ENCODE measurements at regions of chr2 and their contacts with region 1.

Region 1: GRCh38 chr2:226984750-226985582 is 149.1 kb downstream of the RHBDD1 start:
- DNase-seq: peak; percentile 45
- H3K4me3 Mint-ChIP-seq: no peak overlapping the region
- H3K27ac Mint-ChIP-seq: no peak overlapping the region
- H3K4me1 Mint-ChIP-seq: peaks cover 19% of the 10 kb centered on the region
- H3K27me3 Mint-ChIP-seq: no peaks in the 10 kb centered on the region

Region 2: DNA sequence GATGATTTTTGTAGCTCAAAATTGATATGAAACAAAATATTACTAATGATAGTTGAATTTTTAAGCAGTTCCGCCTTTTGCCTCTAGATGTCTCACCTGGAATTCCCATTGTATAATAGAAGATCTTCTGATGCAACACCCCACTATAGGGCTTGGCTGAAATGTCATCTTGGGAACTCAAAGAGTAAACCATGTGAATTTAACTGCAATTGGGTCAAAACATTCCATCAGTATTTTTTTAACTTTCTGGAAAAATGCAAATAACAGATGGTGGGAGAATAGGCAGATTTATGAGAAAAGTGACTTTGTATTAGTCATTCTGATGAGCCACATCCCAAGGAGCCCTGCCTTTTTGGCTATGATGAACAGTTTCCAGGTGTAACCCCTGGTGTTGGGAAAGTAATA is 1095.5 kb before region 1 on chr2:
- CTCF ChIA-PET with region 1: no interaction called
- intact Hi-C with region 1: loop called (anchors 1 kb)
- DNase-seq: no peak
- H3K4me3 Mint-ChIP-seq: no peak overlapping the region
- H3K27ac Mint-ChIP-seq: no peak overlapping the region
- H3K4me1 Mint-ChIP-seq: no peaks in the 10 kb centered on the region
- H3K27me3 Mint-ChIP-seq: peaks cover 14% of the 10 kb centered on the region

Region 3: GRCh38 chr2:226215902-226216503 is 769.0 kb before region 1 on chr2:
- CTCF ChIA-PET with region 1: interaction called, 3 read pairs
- intact Hi-C with region 1: loop called (anchors 1 kb)
- DNase-seq: peak; percentile 80
- H3K4me3 Mint-ChIP-seq: no peak overlapping the region
- H3K27ac Mint-ChIP-seq: no peak overlapping the region
- H3K4me1 Mint-ChIP-seq: no peaks in the 10 kb centered on the region
- H3K27me3 Mint-ChIP-seq: no peaks in the 10 kb centered on the region

Region 4: GRCh38 chr2:226423498-226423960 is 561.4 kb before region 1 on chr2:
- CTCF ChIA-PET with region 1: no interaction called
- intact Hi-C with region 1: loop called (anchors 10 kb)
- DNase-seq: peak; percentile 57
- H3K4me3 Mint-ChIP-seq: peak overlapping the region; percentile 17
- H3K27ac Mint-ChIP-seq: no peak overlapping the region
- H3K4me1 Mint-ChIP-seq: peaks cover 10% of the 10 kb centered on the region
- H3K27me3 Mint-ChIP-seq: peaks cover 10% of the 10 kb centered on the region

Region 5: DNA sequence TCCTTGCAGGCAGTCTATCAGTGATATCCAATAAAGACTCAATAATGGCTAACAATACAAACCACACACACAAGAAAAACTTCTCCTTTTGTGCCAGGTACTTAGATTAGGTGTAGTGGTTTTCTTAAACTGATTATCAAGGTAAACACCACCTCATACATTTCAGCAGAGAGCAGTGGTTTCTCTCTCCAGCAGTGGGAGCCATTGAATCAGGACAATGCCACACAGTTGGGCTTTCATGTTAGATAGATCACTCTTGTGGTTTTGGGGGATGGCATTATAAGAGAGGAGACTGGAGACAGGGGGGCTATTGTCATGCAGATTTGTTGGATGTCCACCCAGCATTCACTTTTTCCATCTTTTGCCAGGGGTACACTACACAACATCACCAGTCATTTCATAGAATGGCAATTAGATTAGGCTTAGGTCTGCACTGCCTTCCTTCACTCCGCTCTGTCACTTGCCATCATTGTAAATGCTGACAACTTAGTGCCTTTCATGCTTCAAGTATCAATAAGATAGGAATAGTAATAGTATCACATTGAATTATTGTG is 171.7 kb before region 1 on chr2:
- CTCF ChIA-PET with region 1: interaction called, 3 read pairs
- intact Hi-C with region 1: loop called (anchors 1 kb)
- DNase-seq: peak; percentile 24
- H3K4me3 Mint-ChIP-seq: no peak overlapping the region
- H3K27ac Mint-ChIP-seq: no peak overlapping the region
- H3K4me1 Mint-ChIP-seq: no peaks in the 10 kb centered on the region
- H3K27me3 Mint-ChIP-seq: peaks cover 17% of the 10 kb centered on the region

Region 6: DNA sequence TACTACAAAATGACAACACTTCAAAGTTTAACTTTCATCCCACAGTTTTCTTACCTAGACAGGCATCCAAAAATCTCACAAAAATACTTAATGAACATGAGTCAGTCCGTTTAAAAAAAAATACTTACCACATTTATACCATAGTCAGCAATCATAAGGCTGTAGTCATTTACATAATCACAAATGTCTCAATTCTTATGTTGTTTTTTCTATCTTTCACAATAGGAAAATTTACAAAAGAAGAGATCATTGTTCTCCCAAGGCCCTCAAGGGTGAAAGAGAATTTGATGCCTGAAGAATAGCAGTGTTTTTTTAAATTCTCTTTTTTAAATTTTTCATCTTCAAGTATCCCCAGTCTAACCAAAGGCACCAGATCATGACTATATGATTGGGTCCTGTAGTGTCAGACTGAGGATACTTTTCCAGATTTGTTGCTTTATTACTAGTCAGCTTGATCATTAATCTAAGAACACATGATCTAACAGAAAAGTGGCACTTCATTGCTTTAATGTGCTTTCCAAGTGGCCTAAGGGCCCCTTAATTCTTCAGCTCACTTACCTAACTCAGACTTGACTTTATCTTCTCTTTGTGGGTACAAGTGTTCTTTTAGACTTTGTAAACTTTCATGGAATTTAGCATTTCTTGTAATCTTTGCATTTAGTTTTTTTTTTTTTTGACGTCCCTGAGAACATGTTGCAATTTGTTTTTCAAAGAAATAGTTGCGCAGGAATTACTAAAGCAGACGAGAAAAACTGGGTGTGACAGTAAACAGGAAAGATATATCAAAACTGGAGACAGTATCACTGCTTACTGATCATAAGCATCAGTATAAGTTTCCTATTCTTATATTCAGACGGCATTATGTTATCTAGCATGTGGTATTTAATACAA is 686.4 kb after region 1 on chr2:
- CTCF ChIA-PET with region 1: no interaction called
- intact Hi-C with region 1: no loop called
- DNase-seq: no peak
- H3K4me3 Mint-ChIP-seq: no peak overlapping the region
- H3K27ac Mint-ChIP-seq: no peak overlapping the region
- H3K4me1 Mint-ChIP-seq: no peaks in the 10 kb centered on the region
- H3K27me3 Mint-ChIP-seq: peaks cover 4% of the 10 kb centered on the region